Heart left ventricle (tissue), 16 donors: ENCODE measurements at regions of chr2 and their contacts with region 1.

Region 1: GRCh38 chr2:190408538-190409271 is 550 bp downstream of the MFSD6 start:
- DNase-seq: peak; percentile 44 to 81 (median 55)
- ATAC-seq: peak in 3 of 4 donors; percentile 40 to 71 (median 51)
- H3K4me3 ChIP-seq: peak overlapping the region; percentile 66 to 99 (median 86)
- H3K27ac ChIP-seq: peak overlapping the region; percentile 79 to 94 (median 85)
- H3K4me1 ChIP-seq: peaks cover 0 to 47% (median 20%) of the 10 kb centered on the region in 12 donors
- H3K27me3 ChIP-seq: no peaks in the 10 kb centered on the region
- CTCF ChIP-seq: no peak
- POLR2A ChIP-seq: peak in 1 of 2 donors; percentile 26

Region 2: GRCh38 chr2:190459881-190460280 is 51.2 kb after region 1 on chr2:
- intact Hi-C with region 1: loop called in 4 of 10 experiments (anchors 5 to 10 kb)
- DNase-seq: no peak
- ATAC-seq: peak; percentile 65 to 84 (median 70)
- H3K4me3 ChIP-seq: no peak overlapping the region
- H3K27ac ChIP-seq: no peak overlapping the region
- H3K4me1 ChIP-seq: peaks cover 0 to 25% (median 7%) of the 10 kb centered on the region in 12 donors
- H3K27me3 ChIP-seq: no peaks in the 10 kb centered on the region
- CTCF ChIP-seq: no peak
- POLR2A ChIP-seq: no peak

Region 3: GRCh38 chr2:190468814-190469569 is 60.3 kb after region 1 on chr2:
- intact Hi-C with region 1: loop called in 4 of 10 experiments (anchors 2 to 10 kb)
- DNase-seq: peak; percentile 72 to 87 (median 82)
- ATAC-seq: peak; percentile 82 to 90 (median 86)
- H3K4me3 ChIP-seq: peak overlapping the region in 5 of 12 donors; percentile 7 to 27 (median 7)
- H3K27ac ChIP-seq: peak overlapping the region; percentile 69 to 91 (median 82)
- H3K4me1 ChIP-seq: peaks cover 17 to 59% (median 40%) of the 10 kb centered on the region in 12 donors
- H3K27me3 ChIP-seq: no peaks in the 10 kb centered on the region
- CTCF ChIP-seq: no peak
- POLR2A ChIP-seq: no peak

Region 4: GRCh38 chr2:190486037-190486623 is 77.4 kb after region 1 on chr2:
- intact Hi-C with region 1: loop called in 3 of 10 experiments (anchors 5 kb)
- DNase-seq: no peak
- ATAC-seq: peak in 2 of 4 donors; percentile 18 to 33
- H3K4me3 ChIP-seq: no peak overlapping the region
- H3K27ac ChIP-seq: peak overlapping the region in 4 of 12 donors; percentile 13 to 48 (median 15)
- H3K4me1 ChIP-seq: peaks cover 0 to 21% (median 9%) of the 10 kb centered on the region in 12 donors
- H3K27me3 ChIP-seq: no peaks in the 10 kb centered on the region
- CTCF ChIP-seq: peak in 1 of 12 donors; percentile 6
- POLR2A ChIP-seq: no peak

Region 5: DNA sequence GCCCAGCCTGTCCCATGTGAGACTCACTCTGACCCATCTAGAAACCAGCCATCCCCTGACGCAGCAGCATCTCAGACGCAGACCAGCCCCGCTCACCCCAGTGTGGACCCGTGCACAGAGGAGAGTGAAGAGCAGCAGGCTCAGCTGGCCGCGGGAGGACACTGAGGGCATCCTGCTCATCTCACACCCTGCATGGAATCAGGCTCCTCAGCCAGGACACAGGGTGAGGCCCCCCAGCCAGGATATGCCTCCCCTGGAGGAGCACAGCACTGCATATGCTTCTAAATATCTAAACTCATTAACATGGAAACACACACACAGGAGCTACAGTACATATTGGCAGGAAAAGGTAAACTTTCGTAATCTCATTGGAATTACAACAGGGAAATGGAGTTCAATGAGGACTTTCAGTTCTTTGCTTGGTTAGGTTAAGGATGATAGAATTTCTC is 91.4 kb after region 1 on chr2:
- intact Hi-C with region 1: loop called in 2 of 10 experiments (anchors 5 to 10 kb)
- DNase-seq: no peak
- ATAC-seq: no peak
- H3K4me3 ChIP-seq: no peak overlapping the region
- H3K27ac ChIP-seq: peak overlapping the region in 2 of 12 donors; percentile 0 to 20
- H3K4me1 ChIP-seq: peaks cover 0 to 23% (median 2%) of the 10 kb centered on the region in 12 donors
- H3K27me3 ChIP-seq: no peaks in the 10 kb centered on the region
- CTCF ChIP-seq: no peak
- POLR2A ChIP-seq: no peak

Region 6: DNA sequence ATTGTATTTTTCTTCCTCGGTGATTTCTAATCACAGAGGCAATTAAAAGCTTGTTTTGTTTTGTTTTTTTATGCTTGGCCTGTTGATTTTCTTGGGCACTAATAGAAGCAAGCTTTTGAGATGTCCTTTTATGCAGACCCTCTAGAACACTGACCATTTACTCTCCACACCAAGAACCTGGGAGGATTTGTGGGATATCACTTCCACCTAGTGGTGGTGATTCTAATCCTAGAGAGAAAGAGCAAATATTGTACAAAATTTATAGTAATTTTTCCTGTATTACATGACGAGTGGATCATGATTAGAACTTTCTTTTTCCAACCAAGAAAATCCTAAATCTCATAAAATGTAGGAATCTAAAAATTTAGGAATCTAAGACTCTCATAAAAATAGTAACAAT is 102.4 kb after region 1 on chr2:
- intact Hi-C with region 1: loop called in 1 of 10 experiments (anchors 10 kb)
- DNase-seq: no peak
- ATAC-seq: no peak
- H3K4me3 ChIP-seq: no peak overlapping the region
- H3K27ac ChIP-seq: no peak overlapping the region
- H3K4me1 ChIP-seq: peaks cover 0 to 10% (median 0%) of the 10 kb centered on the region in 12 donors
- H3K27me3 ChIP-seq: no peaks in the 10 kb centered on the region
- CTCF ChIP-seq: peak; percentile 16 to 72 (median 58)
- POLR2A ChIP-seq: no peak

Region 7: GRCh38 chr2:190583507-190584337 is 175.0 kb after region 1 on chr2:
- intact Hi-C with region 1: loop called in 1 of 10 experiments (anchors 5 kb)
- DNase-seq: peak; percentile 64 to 86 (median 69)
- ATAC-seq: peak; percentile 25 to 74 (median 38)
- H3K4me3 ChIP-seq: no peak overlapping the region
- H3K27ac ChIP-seq: peak overlapping the region in 11 of 12 donors; percentile 44 to 71 (median 54)
- H3K4me1 ChIP-seq: peaks cover 3 to 52% (median 32%) of the 10 kb centered on the region in 12 donors
- H3K27me3 ChIP-seq: no peaks in the 10 kb centered on the region
- CTCF ChIP-seq: no peak
- POLR2A ChIP-seq: no peak